ENCODE measurements at regions of chr6 and their contacts with region 1.

Region 1: GRCh38 chr6:34608321-34609091 is 52.4 kb upstream of the SPDEF start:
- DNase-seq: no peak
- H3K4me3 Mint-ChIP-seq: no peak overlapping the region
- H3K27ac Mint-ChIP-seq: no peak overlapping the region
- H3K4me1 Mint-ChIP-seq: peaks cover 11% of the 10 kb centered on the region
- H3K27me3 Mint-ChIP-seq: no peaks in the 10 kb centered on the region

Region 2: GRCh38 chr6:34459899-34460593 is 148.5 kb before region 1 on chr6:
- intact Hi-C with region 1: loop called (anchors 1 kb)
- DNase-seq: peak; percentile 86
- H3K4me3 Mint-ChIP-seq: no peak overlapping the region
- H3K27ac Mint-ChIP-seq: no peak overlapping the region
- H3K4me1 Mint-ChIP-seq: no peaks in the 10 kb centered on the region
- H3K27me3 Mint-ChIP-seq: peaks cover 19% of the 10 kb centered on the region

Region 3: GRCh38 chr6:34526992-34527728 is 81.3 kb before region 1 on chr6:
- intact Hi-C with region 1: loop called (anchors 1 kb)
- DNase-seq: peak; percentile 98
- H3K4me3 Mint-ChIP-seq: peak overlapping the region; percentile 48
- H3K27ac Mint-ChIP-seq: no peak overlapping the region
- H3K4me1 Mint-ChIP-seq: no peaks in the 10 kb centered on the region
- H3K27me3 Mint-ChIP-seq: peaks cover 2% of the 10 kb centered on the region